ENCODE measurements at regions of chr6 and their contacts with region 1.

Region 1: GRCh38 chr6:159654483-159655098 is 38.5 kb downstream of the SOD2 start:
- DNase-seq: peak in 1 of 2 donors; percentile 69
- ATAC-seq: peak in 2 of 3 donors; percentile 53 to 57
- H3K4me3 ChIP-seq: no peak overlapping the region
- H3K4me3 Mint-ChIP-seq: no peak overlapping the region
- H3K27ac ChIP-seq: no peak overlapping the region
- H3K27ac Mint-ChIP-seq: no peak overlapping the region
- H3K4me1 ChIP-seq: no peaks in the 10 kb centered on the region
- H3K4me1 Mint-ChIP-seq: no peaks in the 10 kb centered on the region
- H3K27me3 ChIP-seq: no peaks in the 10 kb centered on the region
- H3K27me3 Mint-ChIP-seq: no peaks in the 10 kb centered on the region
- CTCF ChIP-seq: peak; percentile 80

Region 2: DNA sequence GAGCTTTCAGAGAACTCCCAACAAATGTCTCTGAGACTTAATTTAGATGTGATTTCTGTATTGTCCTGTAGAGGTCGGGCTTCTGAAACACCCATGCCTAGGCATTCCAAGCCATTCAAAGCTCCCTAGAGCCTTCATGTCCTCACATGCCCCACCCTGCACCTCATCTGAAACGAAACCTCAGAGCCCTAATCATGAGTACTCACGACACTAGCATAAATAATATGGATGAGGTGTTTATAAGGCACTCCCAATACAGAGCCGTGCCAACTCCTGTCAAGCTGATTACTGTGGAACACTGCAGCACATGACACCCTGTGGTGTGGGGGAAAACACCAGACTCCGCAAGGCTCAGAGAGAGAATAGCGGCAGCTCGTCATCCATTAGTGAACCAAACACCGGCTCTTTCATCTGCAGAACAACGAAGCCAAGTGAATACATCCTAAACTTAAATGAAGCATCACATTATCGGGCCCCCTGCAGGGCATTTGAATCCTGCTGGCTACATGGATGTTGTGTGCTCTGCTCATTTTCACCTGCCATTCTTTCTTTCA is 401.6 kb before region 1 on chr6:
- intact Hi-C with region 1: loop called (anchors 5 kb)
- DNase-seq: peak in 1 of 2 donors; percentile 47
- ATAC-seq: peak; percentile 52 to 76 (median 60)
- H3K4me3 ChIP-seq: no peak overlapping the region
- H3K4me3 Mint-ChIP-seq: no peak overlapping the region
- H3K27ac ChIP-seq: no peak overlapping the region
- H3K27ac Mint-ChIP-seq: no peak overlapping the region
- H3K4me1 ChIP-seq: no peaks in the 10 kb centered on the region
- H3K4me1 Mint-ChIP-seq: no peaks in the 10 kb centered on the region
- H3K27me3 ChIP-seq: no peaks in the 10 kb centered on the region
- H3K27me3 Mint-ChIP-seq: peaks cover 15 to 25% of the 10 kb centered on the region in 2 donors
- CTCF ChIP-seq: peak; percentile 61

Region 3: DNA sequence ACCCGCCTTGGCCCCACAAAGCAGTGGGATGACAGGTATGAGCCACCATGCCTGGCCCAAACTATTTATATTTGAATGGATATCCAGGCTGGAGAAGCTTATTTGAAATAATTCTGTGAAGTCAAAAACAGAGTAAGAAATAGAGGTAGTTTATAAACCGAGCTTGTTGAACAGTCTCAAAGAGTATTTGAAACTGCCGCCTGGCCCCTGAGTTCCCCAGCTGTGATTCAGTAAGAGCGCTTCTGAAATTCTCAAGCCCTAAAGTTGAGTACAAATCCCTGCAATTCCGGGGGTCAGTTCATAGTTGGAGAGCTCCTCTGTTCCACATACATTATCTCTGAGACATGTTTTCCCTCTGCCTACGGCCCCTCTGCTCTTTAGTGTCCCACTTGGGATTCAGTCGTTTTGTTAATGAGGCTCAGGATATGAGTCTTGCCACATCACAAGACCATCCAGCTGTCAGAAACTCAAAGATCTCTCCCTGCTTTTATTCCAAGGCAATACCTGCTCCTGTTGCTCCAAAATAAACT is 89.3 kb before region 1 on chr6:
- intact Hi-C with region 1: no loop called
- DNase-seq: no peak
- ATAC-seq: no peak
- H3K4me3 ChIP-seq: no peak overlapping the region
- H3K4me3 Mint-ChIP-seq: no peak overlapping the region
- H3K27ac ChIP-seq: no peak overlapping the region
- H3K27ac Mint-ChIP-seq: no peak overlapping the region
- H3K4me1 ChIP-seq: no peaks in the 10 kb centered on the region
- H3K4me1 Mint-ChIP-seq: no peaks in the 10 kb centered on the region
- H3K27me3 ChIP-seq: no peaks in the 10 kb centered on the region
- H3K27me3 Mint-ChIP-seq: peaks cover 0 to 8% of the 10 kb centered on the region in 2 donors
- CTCF ChIP-seq: no peak

Region 4: GRCh38 chr6:159582736-159583135 is 71.9 kb before region 1 on chr6:
- intact Hi-C with region 1: no loop called
- DNase-seq: no peak
- ATAC-seq: no peak
- H3K4me3 ChIP-seq: no peak overlapping the region
- H3K4me3 Mint-ChIP-seq: no peak overlapping the region
- H3K27ac ChIP-seq: no peak overlapping the region
- H3K27ac Mint-ChIP-seq: no peak overlapping the region
- H3K4me1 ChIP-seq: no peaks in the 10 kb centered on the region
- H3K4me1 Mint-ChIP-seq: no peaks in the 10 kb centered on the region
- H3K27me3 ChIP-seq: no peaks in the 10 kb centered on the region
- H3K27me3 Mint-ChIP-seq: peaks cover 16 to 29% of the 10 kb centered on the region in 2 donors
- CTCF ChIP-seq: no peak